CD8-positive, alpha-beta T cell (primary cell): ENCODE measurements at regions of chr11 and their contacts with region 1.

Region 1: GRCh38 chr11:46238967-46239800 is 38.3 kb upstream of the CREB3L1 start:
- DNase-seq: peak; percentile 58 to 90 (median 77)
- ATAC-seq: peak; percentile 73
- H3K4me3 ChIP-seq: peak overlapping the region; percentile 36 to 43
- H3K4me3 Mint-ChIP-seq: peak overlapping the region; percentile 66
- H3K27ac ChIP-seq: no peak overlapping the region
- H3K27ac Mint-ChIP-seq: no peak overlapping the region
- H3K4me1 ChIP-seq: peaks cover 28% of the 10 kb centered on the region
- H3K4me1 Mint-ChIP-seq: peaks cover 32% of the 10 kb centered on the region
- H3K27me3 ChIP-seq: peaks cover 11 to 19% of the 10 kb centered on the region in 2 experiments
- H3K27me3 Mint-ChIP-seq: peaks cover 33% of the 10 kb centered on the region
- CTCF ChIP-seq: peak; percentile 95

Region 2: GRCh38 chr11:46064221-46064620 is 175.0 kb before region 1 on chr11:
- CTCF ChIA-PET with region 1: no interaction called
- POLR2A ChIA-PET with region 1: no interaction called
- intact Hi-C with region 1: no loop called
- DNase-seq: no peak
- ATAC-seq: no peak
- H3K4me3 ChIP-seq: no peak overlapping the region
- H3K4me3 Mint-ChIP-seq: no peak overlapping the region
- H3K27ac ChIP-seq: no peak overlapping the region
- H3K27ac Mint-ChIP-seq: no peak overlapping the region
- H3K4me1 ChIP-seq: no peaks in the 10 kb centered on the region
- H3K4me1 Mint-ChIP-seq: no peaks in the 10 kb centered on the region
- H3K27me3 ChIP-seq: no peaks in the 10 kb centered on the region
- H3K27me3 Mint-ChIP-seq: no peaks in the 10 kb centered on the region
- CTCF ChIP-seq: no peak

Region 3: DNA sequence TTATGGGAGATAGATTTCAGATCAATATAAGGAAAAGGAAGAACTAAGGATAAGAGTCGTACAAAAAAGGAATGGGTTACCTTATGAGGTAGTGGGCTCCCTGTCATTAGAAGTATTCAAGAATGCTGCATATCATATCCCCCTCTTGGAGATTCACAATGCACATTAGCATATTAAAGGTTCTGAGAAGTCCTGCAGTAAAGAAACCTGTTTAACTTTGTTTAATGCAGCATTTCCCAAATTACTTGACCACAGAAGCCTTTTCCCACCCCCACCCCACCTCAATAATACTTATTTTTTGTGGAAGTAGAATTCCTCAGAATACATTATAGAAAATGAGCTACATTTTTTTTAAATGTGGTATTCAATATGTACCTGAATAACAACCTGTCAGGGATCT is 148.8 kb before region 1 on chr11:
- CTCF ChIA-PET with region 1: no interaction called
- POLR2A ChIA-PET with region 1: no interaction called
- intact Hi-C with region 1: no loop called
- DNase-seq: no peak
- ATAC-seq: no peak
- H3K4me3 ChIP-seq: no peak overlapping the region
- H3K4me3 Mint-ChIP-seq: no peak overlapping the region
- H3K27ac ChIP-seq: no peak overlapping the region
- H3K27ac Mint-ChIP-seq: no peak overlapping the region
- H3K4me1 ChIP-seq: no peaks in the 10 kb centered on the region
- H3K4me1 Mint-ChIP-seq: peaks cover 3% of the 10 kb centered on the region
- H3K27me3 ChIP-seq: no peaks in the 10 kb centered on the region
- H3K27me3 Mint-ChIP-seq: no peaks in the 10 kb centered on the region
- CTCF ChIP-seq: no peak

Region 4: DNA sequence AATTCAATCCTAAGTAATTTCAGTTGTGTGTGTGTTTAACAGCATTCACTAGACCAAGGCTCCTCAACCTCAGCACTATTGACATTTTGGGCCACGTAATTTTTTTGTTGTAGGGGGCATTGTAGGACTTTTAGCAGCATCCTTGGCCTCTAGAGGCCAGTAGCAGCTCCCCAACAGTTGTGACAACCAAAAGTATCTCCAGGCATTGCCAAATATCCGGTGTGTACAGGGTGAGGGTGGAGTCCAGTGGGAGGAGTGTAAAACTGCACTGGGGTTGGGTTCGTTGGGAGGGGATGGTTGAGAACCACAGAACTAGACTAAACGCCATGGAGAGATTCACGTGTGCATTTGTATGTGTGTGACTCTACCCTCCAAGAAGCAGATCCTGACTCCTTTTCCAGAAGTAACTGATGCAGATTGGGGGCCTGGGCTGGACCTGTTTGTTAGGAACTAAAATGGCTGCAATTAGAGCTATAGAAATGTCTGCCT is 112.0 kb before region 1 on chr11:
- CTCF ChIA-PET with region 1: no interaction called
- POLR2A ChIA-PET with region 1: interaction called, 4 read pairs
- intact Hi-C with region 1: loop called in 1 of 2 experiments (anchors 5 kb)
- DNase-seq: peak; percentile 23 to 87 (median 55)
- ATAC-seq: peak; percentile 98
- H3K4me3 ChIP-seq: no peak overlapping the region
- H3K4me3 Mint-ChIP-seq: peak overlapping the region; percentile 19
- H3K27ac ChIP-seq: peak overlapping the region in 1 of 2 experiments; percentile 2
- H3K27ac Mint-ChIP-seq: peak overlapping the region; percentile 0
- H3K4me1 ChIP-seq: peaks cover 9% of the 10 kb centered on the region
- H3K4me1 Mint-ChIP-seq: peaks cover 13% of the 10 kb centered on the region
- H3K27me3 ChIP-seq: no peaks in the 10 kb centered on the region
- H3K27me3 Mint-ChIP-seq: no peaks in the 10 kb centered on the region
- CTCF ChIP-seq: peak; percentile 41

Region 5: GRCh38 chr11:46308631-46309419 is 69.6 kb after region 1 on chr11:
- CTCF ChIA-PET with region 1: interaction called, 307 read pairs
- POLR2A ChIA-PET with region 1: interaction called, 3 read pairs
- intact Hi-C with region 1: loop called (anchors 1 kb)
- DNase-seq: peak; percentile 22 to 78 (median 65)
- ATAC-seq: peak; percentile 90
- H3K4me3 ChIP-seq: no peak overlapping the region
- H3K4me3 Mint-ChIP-seq: no peak overlapping the region
- H3K27ac ChIP-seq: no peak overlapping the region
- H3K27ac Mint-ChIP-seq: no peak overlapping the region
- H3K4me1 ChIP-seq: peaks cover 15% of the 10 kb centered on the region
- H3K4me1 Mint-ChIP-seq: peaks cover 11% of the 10 kb centered on the region
- H3K27me3 ChIP-seq: no peaks in the 10 kb centered on the region
- H3K27me3 Mint-ChIP-seq: no peaks in the 10 kb centered on the region
- CTCF ChIP-seq: peak; percentile 85

Region 6: DNA sequence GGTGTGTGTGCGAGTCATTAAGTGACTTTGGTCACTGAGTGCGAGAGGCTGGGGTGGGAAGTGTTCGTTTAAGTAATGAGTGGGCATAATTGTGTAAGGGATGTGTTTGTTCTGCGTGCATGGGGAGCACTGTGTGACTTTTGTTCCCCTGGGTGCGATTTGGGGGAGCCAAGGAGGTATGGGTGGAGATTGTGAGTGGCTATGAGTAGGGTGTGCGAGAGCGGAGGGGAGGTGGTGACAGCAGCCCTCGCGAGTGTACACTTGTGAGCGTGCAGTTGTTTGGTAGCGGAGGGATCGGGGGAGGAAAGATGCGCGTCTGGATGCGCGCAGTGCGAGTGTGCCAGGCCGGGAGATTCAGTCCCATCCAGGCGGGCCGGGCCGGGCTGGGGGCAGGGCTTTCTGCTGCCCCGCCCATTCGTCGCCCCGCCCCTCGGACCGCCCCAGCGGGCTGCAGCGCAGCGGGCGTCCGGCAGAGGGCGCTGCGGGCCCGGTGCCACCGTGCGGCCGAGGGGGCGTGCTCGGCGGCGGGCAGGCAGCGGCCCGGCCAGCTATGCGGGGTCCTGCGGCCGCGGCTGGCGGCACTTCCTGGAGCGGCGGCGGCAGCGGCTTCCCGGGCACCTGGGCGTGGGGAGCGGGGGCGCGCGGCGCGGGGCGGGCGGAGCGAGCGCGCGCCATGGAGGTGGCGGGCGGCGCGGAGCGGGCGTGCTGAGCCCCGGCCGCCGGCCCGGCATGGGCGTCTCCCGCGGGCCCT is 107.9 kb after region 1 on chr11 and contains the start of gene DGKZ:
- CTCF ChIA-PET with region 1: interaction called, 45 read pairs
- POLR2A ChIA-PET with region 1: interaction called, 3 read pairs
- intact Hi-C with region 1: no loop called
- DNase-seq: peak; percentile 83 to 96 (median 87)
- ATAC-seq: peak; percentile 80
- H3K4me3 ChIP-seq: peak within 1 kb of the TSS; percentile 72 to 94
- H3K4me3 Mint-ChIP-seq: peak within 1 kb of the TSS; percentile 90
- H3K27ac ChIP-seq: peak within 1 kb of the TSS; percentile 55 to 68
- H3K27ac Mint-ChIP-seq: peak within 1 kb of the TSS; percentile 90
- H3K4me1 ChIP-seq: peaks cover 72% of the 10 kb centered on the region
- H3K4me1 Mint-ChIP-seq: peaks cover 79% of the 10 kb centered on the region
- H3K27me3 ChIP-seq: no peaks in the 10 kb centered on the region
- H3K27me3 Mint-ChIP-seq: no peaks in the 10 kb centered on the region
- CTCF ChIP-seq: peak; percentile 55
- total RNA-seq, gene DGKZ: 131 to 135 TPM

Region 7: DNA sequence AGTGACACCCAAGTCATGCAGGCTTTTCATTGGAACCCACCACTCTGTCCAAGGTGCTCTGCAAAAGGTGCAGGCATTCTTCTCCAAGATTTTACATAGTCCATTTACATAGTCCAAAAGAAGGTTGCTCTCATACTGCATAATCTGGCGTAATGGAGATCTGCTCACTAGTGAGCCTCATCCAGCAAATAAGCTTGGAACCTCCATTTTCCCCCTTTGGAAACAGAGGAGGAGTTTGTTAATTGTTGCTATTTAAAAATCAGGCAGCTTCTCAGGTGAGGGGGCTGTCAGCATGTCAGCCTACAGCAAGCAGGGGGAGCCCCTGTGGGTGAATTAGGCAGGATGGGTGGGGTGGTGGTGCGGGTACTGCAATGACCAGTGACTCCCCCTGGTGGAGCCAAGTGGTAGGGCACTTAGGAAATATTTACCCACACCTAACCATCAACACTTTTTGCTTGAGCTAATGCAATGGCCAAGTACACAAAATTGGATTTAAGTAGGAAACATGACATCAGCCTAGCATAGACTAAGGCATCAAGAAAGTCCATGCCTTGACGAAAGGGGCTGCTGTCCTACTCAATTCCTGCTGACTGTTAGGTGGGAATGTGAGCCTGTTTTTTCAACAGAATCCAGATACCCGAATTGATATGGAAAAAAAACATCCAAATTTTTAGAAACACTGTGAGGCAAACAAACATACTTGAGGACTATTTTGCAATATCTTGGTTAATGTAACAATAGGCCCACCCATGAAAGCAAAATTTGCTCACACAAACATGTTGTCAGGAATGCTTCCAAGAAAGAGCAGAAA is 290.1 kb after region 1 on chr11:
- CTCF ChIA-PET with region 1: interaction called, 7 read pairs
- POLR2A ChIA-PET with region 1: no interaction called
- intact Hi-C with region 1: loop called in 1 of 2 experiments (anchors 1 kb)
- DNase-seq: peak; percentile 48 to 86 (median 79)
- ATAC-seq: peak; percentile 100
- H3K4me3 ChIP-seq: no peak overlapping the region
- H3K4me3 Mint-ChIP-seq: no peak overlapping the region
- H3K27ac ChIP-seq: no peak overlapping the region
- H3K27ac Mint-ChIP-seq: no peak overlapping the region
- H3K4me1 ChIP-seq: peaks cover 6% of the 10 kb centered on the region
- H3K4me1 Mint-ChIP-seq: peaks cover 42% of the 10 kb centered on the region
- H3K27me3 ChIP-seq: no peaks in the 10 kb centered on the region
- H3K27me3 Mint-ChIP-seq: no peaks in the 10 kb centered on the region
- CTCF ChIP-seq: peak; percentile 93